ENCODE measurements at regions of chr18 and their contacts with region 1.

Region 1: GRCh38 chr18:27616324-27616723 is 431.2 kb upstream of the CHST9 start:
- DNase-seq: no peak
- H3K4me3 ChIP-seq: no peak overlapping the region
- H3K27ac ChIP-seq: no peak overlapping the region
- H3K4me1 ChIP-seq: no peaks in the 10 kb centered on the region
- H3K27me3 ChIP-seq: no peaks in the 10 kb centered on the region
- CTCF ChIP-seq: no peak
- POLR2A ChIP-seq: no peak

Region 2: DNA sequence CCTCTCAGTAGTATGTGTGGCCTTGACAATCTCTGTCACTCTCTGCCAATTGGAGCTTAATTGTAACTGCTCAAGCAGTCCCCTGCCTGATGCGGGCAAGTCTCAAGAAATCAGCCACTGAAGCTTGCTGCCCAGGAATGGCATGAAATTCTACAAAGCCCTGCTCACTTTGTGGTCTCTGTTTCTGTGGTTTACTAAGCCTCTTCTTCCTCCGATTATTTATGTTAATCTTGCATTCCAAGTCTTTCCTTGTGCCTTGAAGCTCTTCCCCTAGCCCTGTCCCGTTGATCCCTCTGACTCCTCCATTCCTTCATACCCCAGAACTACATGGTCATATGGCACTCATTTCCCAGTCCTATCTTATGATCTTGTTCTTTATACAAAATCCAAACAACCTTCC is 58.1 kb after region 1 on chr18:
- intact Hi-C with region 1: loop called in 1 of 2 experiments (anchors 10 kb)
- DNase-seq: no peak
- H3K4me3 ChIP-seq: no peak overlapping the region
- H3K27ac ChIP-seq: no peak overlapping the region
- H3K4me1 ChIP-seq: no peaks in the 10 kb centered on the region
- H3K27me3 ChIP-seq: no peaks in the 10 kb centered on the region
- CTCF ChIP-seq: no peak
- POLR2A ChIP-seq: no peak

Measured in adrenal gland (tissue), 19 donors.